H1 (cell line): ENCODE measurements at regions of chr11 and their contacts with region 1.

Region 1: GRCh38 chr11:68751004-68751856 is at the start of gene TESMIN:
- DNase-seq: peak; percentile 85 to 99
- H3K4me3 ChIP-seq: peak within 1 kb of the TSS; percentile 39 to 62 (median 52)
- H3K27ac ChIP-seq: peak within 1 kb of the TSS; percentile 80
- H3K4me1 ChIP-seq: peaks cover 0 to 10% (median 5%) of the 10 kb centered on the region in 4 experiments; a peak in 4 of 7 replicates
- H3K27me3 ChIP-seq: no peaks in the 10 kb centered on the region
- CTCF ChIP-seq: no peak
- EP300 ChIP-seq: peak in 1 of 2 experiments; percentile 81; a peak in 1 of 3 replicates
- POLR2A ChIP-seq: peak; percentile 74 to 78
- RAD21 ChIP-seq: peak in 1 of 2 experiments; percentile 10; a peak in 1 of 4 replicates
- total RNA-seq, gene TESMIN: 59.5 and 61.1 TPM in 2 replicates

Region 2: DNA sequence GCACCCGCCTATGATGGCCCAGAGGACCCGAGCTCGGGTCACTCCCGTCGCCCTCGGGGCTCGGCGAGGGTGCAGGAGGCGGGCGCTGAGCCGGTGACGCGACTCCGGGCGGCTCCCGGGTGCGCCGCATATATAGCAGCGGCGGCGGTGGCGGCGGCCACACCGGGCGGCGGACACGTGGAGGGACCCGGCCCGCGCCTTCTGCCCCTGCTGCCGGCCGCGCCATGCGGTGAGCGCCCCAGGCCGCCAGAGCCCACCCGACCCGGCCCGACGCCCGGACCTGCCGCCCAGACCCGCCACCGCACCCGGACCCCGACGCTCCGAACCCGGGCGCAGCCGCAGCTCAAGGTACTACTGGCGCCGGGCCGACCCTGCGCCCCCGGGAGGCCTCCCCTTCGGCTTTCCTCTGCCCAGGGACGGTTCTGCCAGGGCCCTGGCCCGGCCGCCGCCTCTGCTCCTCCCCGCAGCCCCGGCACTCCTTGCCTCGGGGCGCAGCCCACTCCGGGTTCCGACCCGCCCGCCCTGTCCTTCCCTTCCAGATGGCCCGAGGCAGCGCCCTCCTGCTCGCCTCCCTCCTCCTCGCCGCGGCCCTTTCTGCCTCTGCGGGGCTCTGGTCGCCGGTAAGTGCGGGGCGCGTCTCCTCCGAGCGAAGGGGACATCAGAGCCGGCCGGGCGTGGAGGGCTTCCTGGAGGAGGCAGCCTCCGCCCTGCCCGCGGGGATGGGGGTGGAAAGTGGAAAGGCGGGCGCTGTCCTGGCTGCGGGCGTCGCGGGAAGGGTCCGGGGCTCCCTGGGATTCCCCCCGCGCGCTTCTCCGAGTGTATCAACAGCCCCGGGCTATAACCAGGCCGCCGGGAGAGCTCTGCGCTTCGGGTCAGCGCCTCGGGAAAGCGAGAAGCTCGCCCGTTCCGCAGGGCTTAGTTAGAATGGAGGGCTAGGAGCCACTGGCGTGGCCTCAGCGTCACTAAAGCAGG is 66.6 kb before region 1 on chr11 and contains the start of gene GAL:
- CTCF ChIA-PET with region 1: no interaction called
- POLR2A ChIA-PET with region 1: interaction called, 22 read pairs
- DNase-seq: no peak
- H3K4me3 ChIP-seq: peak within 1 kb of the TSS; percentile 44 to 79 (median 54)
- H3K27ac ChIP-seq: no peak within 1 kb of the TSS
- H3K4me1 ChIP-seq: peaks cover 0 to 13% (median 10%) of the 10 kb centered on the region in 4 experiments; a peak in 6 of 7 replicates
- H3K27me3 ChIP-seq: peaks cover 11 to 41% (median 31%) of the 10 kb centered on the region in 4 experiments
- CTCF ChIP-seq: no peak
- EP300 ChIP-seq: no peak
- POLR2A ChIP-seq: peak in 1 of 2 experiments; percentile 52; a peak in 2 of 3 replicates
- RAD21 ChIP-seq: no peak
- total RNA-seq, gene GAL: 233 and 234 TPM in 2 replicates

Region 3: DNA sequence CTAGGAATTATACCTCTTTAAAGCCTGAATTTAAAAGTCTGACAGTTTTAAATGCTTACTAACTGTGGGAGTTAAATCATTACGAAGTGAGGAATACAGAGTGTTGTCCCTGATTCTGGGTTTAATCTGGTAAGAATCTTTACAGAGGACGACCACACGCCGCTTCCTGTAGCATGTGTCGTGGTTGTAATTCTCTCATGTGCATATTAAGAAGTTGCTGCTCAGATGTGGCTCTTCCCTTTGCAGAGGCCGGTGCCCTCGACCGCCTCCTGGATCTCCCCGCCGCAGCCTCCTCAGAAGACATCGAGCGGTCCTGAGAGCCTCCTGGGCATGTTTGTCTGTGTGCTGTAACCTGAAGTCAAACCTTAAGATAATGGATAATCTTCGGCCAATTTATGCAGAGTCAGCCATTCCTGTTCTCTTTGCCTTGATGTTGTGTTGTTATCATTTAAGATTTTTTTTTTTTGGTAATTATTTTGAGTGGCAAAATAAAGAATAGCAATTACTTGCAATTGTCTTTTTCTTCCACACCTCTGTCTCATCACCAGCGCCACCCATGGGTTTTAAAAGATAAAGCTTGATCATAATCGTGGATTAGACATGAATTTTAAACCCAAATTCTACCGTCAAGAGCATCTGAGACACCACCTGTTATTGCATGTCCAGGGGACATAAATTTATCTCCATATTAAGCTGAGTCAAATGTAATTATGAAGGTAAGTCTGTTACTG is 60.4 kb before region 1 on chr11:
- CTCF ChIA-PET with region 1: interaction called, 3 read pairs
- POLR2A ChIA-PET with region 1: interaction called, 11 read pairs
- DNase-seq: peak in 1 of 2 experiments; percentile 34
- H3K4me3 ChIP-seq: no peak overlapping the region
- H3K27ac ChIP-seq: no peak overlapping the region
- H3K4me1 ChIP-seq: peaks cover 5 to 26% (median 11%) of the 10 kb centered on the region in 4 experiments
- H3K27me3 ChIP-seq: peaks cover 0 to 7% (median 1%) of the 10 kb centered on the region in 4 experiments; a peak in 4 of 7 replicates
- CTCF ChIP-seq: no peak
- EP300 ChIP-seq: no peak
- POLR2A ChIP-seq: no peak
- RAD21 ChIP-seq: peak in 1 of 2 experiments; percentile 24; a peak in 1 of 4 replicates

Region 4: GRCh38 chr11:68735125-68735524 is 16.1 kb before region 1 on chr11:
- CTCF ChIA-PET with region 1: interaction called, 4 read pairs
- POLR2A ChIA-PET with region 1: interaction called, 32 read pairs
- DNase-seq: no peak
- H3K4me3 ChIP-seq: no peak overlapping the region
- H3K27ac ChIP-seq: no peak overlapping the region
- H3K4me1 ChIP-seq: no peaks in the 10 kb centered on the region
- H3K27me3 ChIP-seq: no peaks in the 10 kb centered on the region
- CTCF ChIP-seq: no peak
- EP300 ChIP-seq: no peak
- POLR2A ChIP-seq: no peak
- RAD21 ChIP-seq: no peak

Region 5: DNA sequence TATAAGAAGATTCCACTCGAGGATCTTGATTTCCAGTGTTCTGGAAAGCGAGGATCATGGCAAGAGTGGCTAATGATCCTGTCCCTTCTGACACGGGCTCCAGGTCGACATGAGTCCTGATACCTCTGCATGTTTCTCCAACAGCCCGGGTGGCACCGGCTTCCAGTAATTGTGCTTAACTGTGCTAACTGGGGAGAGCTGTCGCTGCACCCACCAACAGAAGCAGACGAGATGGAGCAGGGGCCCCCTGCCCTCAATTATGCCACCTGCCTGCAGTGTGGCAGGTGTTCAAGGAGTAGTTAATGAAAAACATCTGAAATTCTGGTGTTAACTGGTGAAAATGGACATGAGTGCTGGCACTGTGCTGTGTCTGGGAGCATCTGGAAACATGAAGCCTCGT is 146.2 kb after region 1 on chr11:
- CTCF ChIA-PET with region 1: no interaction called
- POLR2A ChIA-PET with region 1: no interaction called
- DNase-seq: no peak
- H3K4me3 ChIP-seq: no peak overlapping the region
- H3K27ac ChIP-seq: no peak overlapping the region
- H3K4me1 ChIP-seq: no peaks in the 10 kb centered on the region
- H3K27me3 ChIP-seq: no peaks in the 10 kb centered on the region
- CTCF ChIP-seq: no peak
- EP300 ChIP-seq: no peak
- POLR2A ChIP-seq: no peak
- RAD21 ChIP-seq: no peak